SK-N-SH (cell line): ENCODE measurements at regions of chr6 and their contacts with region 1.

Region 1: DNA sequence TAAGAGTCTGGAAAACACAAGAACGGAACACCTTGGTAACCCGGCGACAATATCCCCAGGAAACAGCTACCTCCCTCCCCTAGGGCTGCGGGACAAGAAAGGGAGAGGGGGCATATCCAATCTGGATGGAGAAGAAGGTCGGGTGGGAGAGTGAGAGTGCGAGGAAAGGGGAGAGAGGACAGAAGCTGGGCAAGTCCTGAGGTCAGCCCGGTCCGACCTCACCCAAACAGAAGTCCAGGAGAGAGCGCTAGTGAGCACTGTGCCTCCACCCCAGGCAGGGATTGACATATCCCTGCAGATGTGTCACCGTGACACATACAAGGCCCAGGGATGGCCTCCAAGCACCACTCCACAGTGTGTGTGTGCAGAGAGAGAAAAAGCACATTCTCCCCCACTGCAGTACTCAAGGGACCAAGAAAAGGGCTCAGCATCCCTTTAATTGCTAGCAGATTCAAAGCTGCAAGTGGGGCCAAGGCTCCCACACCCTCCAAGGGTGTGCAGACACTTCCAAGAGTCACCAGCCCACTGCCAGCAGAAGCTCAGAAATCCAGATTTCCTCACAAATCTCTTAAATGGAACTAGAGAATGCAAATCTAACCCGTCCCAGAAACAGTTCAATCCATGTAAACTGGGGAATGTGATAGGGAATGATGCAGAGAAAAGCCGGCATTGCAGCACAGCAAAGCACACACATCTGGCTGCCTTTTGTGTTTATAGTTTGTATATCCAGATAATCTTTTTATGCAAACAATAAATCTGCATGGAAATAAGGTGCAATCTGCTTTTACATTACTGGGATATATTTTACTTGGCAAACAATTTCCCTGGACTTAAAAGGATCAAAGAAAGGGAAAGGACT is 3.1 kb downstream of the PXDC1 start:
- DNase-seq: peak; percentile 86
- H3K4me3 ChIP-seq: peak overlapping the region; percentile 69 to 70; a peak in 3 of 4 replicates
- H3K27ac ChIP-seq: peak overlapping the region in 1 of 2 experiments; percentile 89; a peak in 2 of 4 replicates
- H3K4me1 ChIP-seq: peaks cover 14 to 23% of the 10 kb centered on the region in 2 experiments; a peak in 3 of 4 replicates
- H3K27me3 ChIP-seq: no peaks in the 10 kb centered on the region
- CTCF ChIP-seq: peak; percentile 80
- EP300 ChIP-seq: no peak
- RAD21 ChIP-seq: peak; percentile 66

Region 2: DNA sequence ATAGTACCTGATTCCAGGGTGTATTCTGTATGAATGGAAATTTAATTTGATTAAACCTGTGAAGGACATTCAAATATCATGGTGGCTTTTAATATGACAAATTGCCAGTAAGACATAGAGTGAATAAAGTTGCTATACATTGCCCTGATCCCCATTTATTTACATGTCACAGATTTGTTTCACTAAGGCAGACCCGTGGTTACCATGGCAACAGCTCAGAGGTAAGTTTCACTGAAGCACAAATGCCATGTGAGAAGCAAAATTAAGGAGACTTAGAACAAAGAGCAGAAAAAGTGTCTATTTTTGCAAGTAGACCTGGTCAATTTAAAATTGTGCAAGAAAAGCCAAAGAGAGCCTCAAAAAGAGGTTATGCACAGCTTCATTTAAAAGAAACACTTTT is 60.6 kb before region 1 on chr6:
- CTCF ChIA-PET with region 1: no interaction called
- POLR2A ChIA-PET with region 1: no interaction called
- DNase-seq: no peak
- H3K4me3 ChIP-seq: no peak overlapping the region
- H3K27ac ChIP-seq: no peak overlapping the region
- H3K4me1 ChIP-seq: no peaks in the 10 kb centered on the region
- H3K27me3 ChIP-seq: no peaks in the 10 kb centered on the region
- CTCF ChIP-seq: no peak
- EP300 ChIP-seq: no peak
- RAD21 ChIP-seq: no peak

Region 3: DNA sequence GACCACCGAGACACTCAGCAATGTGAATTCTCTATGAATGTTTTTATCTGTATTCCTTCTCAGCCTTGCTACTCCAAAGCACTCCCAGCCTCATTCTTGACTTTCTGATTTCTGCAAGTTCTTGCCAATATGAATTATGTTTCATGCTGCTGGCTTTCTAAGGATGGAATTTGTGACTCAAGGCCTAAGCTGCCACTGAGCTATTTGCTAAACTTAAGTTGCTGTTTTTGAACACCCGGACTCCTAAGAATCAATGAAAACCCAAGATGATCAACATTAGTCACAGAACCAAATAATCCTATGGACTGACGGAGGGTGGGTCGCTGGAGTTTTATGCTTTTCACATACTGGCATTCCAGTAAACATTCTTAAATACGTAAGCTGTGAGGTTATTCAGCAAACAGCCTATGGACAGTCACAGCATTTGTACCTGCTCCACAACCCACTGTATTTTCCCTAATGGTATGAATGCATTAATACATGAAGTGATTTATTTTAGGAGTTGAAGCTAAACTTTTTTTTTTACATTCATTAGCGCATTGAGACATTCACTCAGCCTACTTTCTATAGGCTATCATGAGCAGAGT is 11.3 kb after region 1 on chr6:
- CTCF ChIA-PET with region 1: interaction called, 12 read pairs
- POLR2A ChIA-PET with region 1: no interaction called
- DNase-seq: no peak
- H3K4me3 ChIP-seq: no peak overlapping the region
- H3K27ac ChIP-seq: peak overlapping the region; percentile 25 to 62; a peak in 3 of 4 replicates
- H3K4me1 ChIP-seq: peaks cover 0 to 4% of the 10 kb centered on the region in 2 experiments; a peak in 1 of 4 replicates
- H3K27me3 ChIP-seq: no peaks in the 10 kb centered on the region
- CTCF ChIP-seq: no peak; the same call in 1 of the 2 replicates
- EP300 ChIP-seq: no peak
- RAD21 ChIP-seq: no peak

Region 4: GRCh38 chr6:3977875-3978711 is 229.7 kb after region 1 on chr6:
- CTCF ChIA-PET with region 1: interaction called, 11 read pairs
- POLR2A ChIA-PET with region 1: no interaction called
- DNase-seq: no peak
- H3K4me3 ChIP-seq: no peak overlapping the region
- H3K27ac ChIP-seq: no peak overlapping the region
- H3K4me1 ChIP-seq: no peaks in the 10 kb centered on the region
- H3K27me3 ChIP-seq: no peaks in the 10 kb centered on the region
- CTCF ChIP-seq: peak; percentile 48
- EP300 ChIP-seq: no peak
- RAD21 ChIP-seq: peak; percentile 30; the same call in 1 of the 2 replicates

Region 5: DNA sequence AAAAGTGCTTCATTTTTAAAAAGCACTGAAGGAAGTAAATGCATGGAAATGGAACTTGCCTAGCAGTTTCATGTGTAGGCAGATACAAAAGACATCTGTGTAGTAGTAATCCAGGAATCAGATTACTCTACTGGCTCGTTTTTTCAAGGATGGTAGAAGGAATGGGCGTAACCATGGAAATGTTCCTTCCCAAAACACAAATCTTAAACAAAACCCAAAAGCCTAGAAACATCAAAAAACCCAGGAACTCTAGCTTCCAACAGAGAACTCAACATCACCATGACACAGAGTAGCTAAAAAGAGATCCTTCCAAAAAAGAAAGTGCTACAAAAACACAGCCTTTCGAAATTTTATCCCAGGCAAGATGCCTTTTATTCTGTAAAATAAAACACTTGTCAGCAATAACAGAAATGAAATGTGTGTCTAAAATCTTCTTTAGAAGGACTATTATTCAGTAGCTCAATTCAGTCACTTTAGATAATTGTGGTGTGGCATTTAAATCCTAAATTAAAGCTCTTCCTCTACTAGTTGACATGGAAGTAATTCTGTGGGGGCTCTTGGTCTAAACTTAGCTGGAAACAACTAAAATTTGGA is 248.8 kb after region 1 on chr6:
- CTCF ChIA-PET with region 1: interaction called, 21 read pairs
- POLR2A ChIA-PET with region 1: no interaction called
- DNase-seq: no peak
- H3K4me3 ChIP-seq: no peak overlapping the region
- H3K27ac ChIP-seq: peak overlapping the region in 1 of 2 experiments; percentile 46; a peak in 1 of 4 replicates
- H3K4me1 ChIP-seq: peaks cover 0 to 7% of the 10 kb centered on the region in 2 experiments; a peak in 1 of 4 replicates
- H3K27me3 ChIP-seq: no peaks in the 10 kb centered on the region
- CTCF ChIP-seq: no peak
- EP300 ChIP-seq: no peak
- RAD21 ChIP-seq: no peak